Keratinocyte (primary cell): ENCODE measurements at regions of chr6 and their contacts with region 1.

Region 1: DNA sequence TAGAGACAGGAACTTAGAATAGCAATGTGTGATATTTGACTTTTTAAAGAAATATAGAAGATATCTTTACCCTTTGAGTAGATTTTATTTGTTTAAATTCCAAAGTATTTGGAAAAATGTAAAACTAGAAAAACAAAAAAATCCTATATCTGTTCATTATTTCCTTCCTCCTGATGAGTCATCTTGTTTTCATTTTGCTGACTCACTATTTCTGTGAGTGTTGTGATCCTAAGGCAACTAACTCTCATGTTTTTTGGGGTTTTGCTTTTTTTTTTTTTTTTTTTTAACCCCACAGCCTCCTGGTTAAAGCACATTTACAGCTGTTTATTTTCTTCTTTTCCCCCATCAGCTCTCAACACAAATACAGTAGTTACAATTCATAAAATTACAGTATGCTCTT is 37.8 kb upstream of the THEMIS start:
- DNase-seq: no peak
- H3K4me3 ChIP-seq: no peak overlapping the region
- H3K27ac ChIP-seq: peak overlapping the region; percentile 70
- H3K4me1 ChIP-seq: peaks cover 13% of the 10 kb centered on the region
- H3K27me3 ChIP-seq: no peaks in the 10 kb centered on the region
- CTCF ChIP-seq: no peak

Region 2: DNA sequence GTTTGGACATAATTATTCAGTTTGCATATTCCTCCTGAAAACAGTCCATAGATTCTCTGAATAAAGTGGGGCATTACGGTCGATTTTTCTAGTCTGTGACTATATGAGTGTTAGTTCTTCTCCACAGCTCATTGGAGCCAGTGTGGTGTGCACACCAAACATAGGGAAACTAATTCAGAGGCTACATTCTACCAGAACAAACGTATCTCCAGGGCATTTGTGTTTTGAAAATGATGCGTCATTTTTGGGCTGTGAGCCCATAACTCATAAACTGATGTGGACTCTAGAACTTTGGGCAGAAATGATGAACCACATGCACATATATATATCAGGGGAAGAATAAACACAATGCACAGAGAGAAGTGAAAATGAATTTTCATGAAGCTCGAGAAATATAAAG is 320.0 kb before region 1 on chr6:
- dilution Hi-C with region 1: no loop called
- DNase-seq: no peak
- H3K4me3 ChIP-seq: no peak overlapping the region
- H3K27ac ChIP-seq: no peak overlapping the region
- H3K4me1 ChIP-seq: no peaks in the 10 kb centered on the region
- H3K27me3 ChIP-seq: peaks cover 8% of the 10 kb centered on the region
- CTCF ChIP-seq: no peak

Region 3: GRCh38 chr6:127725821-127726220 is 212.9 kb before region 1 on chr6:
- dilution Hi-C with region 1: no loop called
- DNase-seq: no peak
- H3K4me3 ChIP-seq: no peak overlapping the region
- H3K27ac ChIP-seq: no peak overlapping the region
- H3K4me1 ChIP-seq: no peaks in the 10 kb centered on the region
- H3K27me3 ChIP-seq: peaks cover 10% of the 10 kb centered on the region
- CTCF ChIP-seq: no peak

Region 4: DNA sequence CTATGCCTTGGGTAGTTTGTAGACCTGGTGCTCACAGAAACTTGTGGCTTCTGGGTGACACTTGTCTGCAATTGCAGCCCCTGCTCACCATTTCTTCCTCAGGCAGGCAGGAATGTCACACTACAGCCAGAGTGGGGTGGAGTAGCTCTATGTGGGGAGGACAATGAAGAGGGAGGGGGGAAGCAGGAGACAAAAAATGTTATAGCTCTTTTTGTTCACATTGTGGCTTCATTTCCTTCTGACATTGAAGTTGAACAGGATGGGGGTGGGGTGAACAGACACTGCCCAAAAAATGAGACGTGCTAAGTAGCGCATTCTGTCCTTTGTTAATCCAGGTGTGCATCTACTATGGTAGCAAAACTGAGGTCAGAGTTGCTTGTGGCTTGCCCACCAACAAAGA is 37.8 kb before region 1 on chr6 and contains the start of gene THEMIS:
- dilution Hi-C with region 1: loop called (anchors 5 kb)
- DNase-seq: no peak
- H3K4me3 ChIP-seq: no peak within 1 kb of the TSS
- H3K27ac ChIP-seq: no peak within 1 kb of the TSS
- H3K4me1 ChIP-seq: no peaks in the 10 kb centered on the region
- H3K27me3 ChIP-seq: no peaks in the 10 kb centered on the region
- CTCF ChIP-seq: no peak
- polyA plus RNA-seq, gene THEMIS: not detected in 3 replicates

Region 5: GRCh38 chr6:128099571-128100197 is 161.0 kb after region 1 on chr6:
- dilution Hi-C with region 1: no loop called
- DNase-seq: no peak
- H3K4me3 ChIP-seq: no peak overlapping the region
- H3K27ac ChIP-seq: no peak overlapping the region
- H3K4me1 ChIP-seq: no peaks in the 10 kb centered on the region
- H3K27me3 ChIP-seq: no peaks in the 10 kb centered on the region
- CTCF ChIP-seq: no peak